Naive thymus-derived CD4-positive, alpha-beta T cell (primary cell): ENCODE measurements at regions of chr19 and their contacts with region 1.

Region 1: GRCh38 chr19:45717166-45717982 is 13.3 kb downstream of the FBXO46 start:
- DNase-seq: peak; percentile 92 to 99 (median 98)
- ATAC-seq: peak; percentile 98
- H3K4me3 ChIP-seq: peak overlapping the region; percentile 80
- H3K4me3 Mint-ChIP-seq: peak overlapping the region; percentile 89 to 99 (median 95)
- H3K27ac ChIP-seq: peak overlapping the region; percentile 89
- H3K27ac Mint-ChIP-seq: peak overlapping the region; percentile 88 to 97 (median 96)
- H3K4me1 ChIP-seq: peaks cover 17 to 26% of the 10 kb centered on the region in 2 donors
- H3K4me1 Mint-ChIP-seq: peaks cover 26 to 55% (median 38%) of the 10 kb centered on the region in 7 donors
- H3K27me3 ChIP-seq: no peaks in the 10 kb centered on the region
- H3K27me3 Mint-ChIP-seq: no peaks in the 10 kb centered on the region

Region 2: DNA sequence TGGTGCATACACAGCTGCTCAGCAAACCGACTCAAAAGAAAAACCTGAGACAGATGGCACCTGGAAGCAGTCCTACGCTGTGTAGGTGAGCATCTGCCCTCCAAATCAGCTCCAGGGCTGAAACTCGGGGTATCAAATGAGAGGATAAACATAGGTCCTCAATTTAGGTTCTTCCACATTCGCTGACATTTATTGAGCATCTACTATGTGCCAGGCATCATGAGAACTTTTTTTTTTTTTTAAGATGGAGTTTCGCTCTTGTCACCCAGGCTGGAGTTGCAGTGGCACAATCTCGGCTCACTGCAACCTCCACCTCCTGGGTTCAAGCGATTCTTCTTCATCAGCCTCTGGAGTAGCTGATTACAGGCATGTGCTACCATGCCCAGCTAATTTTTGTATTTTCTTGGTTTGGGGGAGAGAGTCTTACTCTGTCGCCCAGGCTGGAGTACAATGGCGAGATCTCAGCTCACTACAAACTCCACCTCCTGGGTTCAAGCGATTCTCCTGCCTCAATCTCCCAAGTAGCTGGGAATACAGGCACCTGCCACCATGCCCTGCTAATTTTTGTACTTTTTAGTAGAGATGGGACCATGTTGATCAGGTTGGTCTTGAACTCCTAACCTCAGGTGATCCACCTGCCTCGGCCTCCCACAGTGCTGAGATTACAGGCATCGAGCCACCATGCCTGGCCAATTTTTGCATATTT is 11.5 kb before region 1 on chr19:
- CTCF ChIA-PET with region 1: interaction called, 3 read pairs
- POLR2A ChIA-PET with region 1: interaction called, 15 read pairs
- intact Hi-C with region 1: no loop called
- DNase-seq: no peak
- ATAC-seq: no peak
- H3K4me3 ChIP-seq: no peak overlapping the region
- H3K4me3 Mint-ChIP-seq: no peak overlapping the region
- H3K27ac ChIP-seq: no peak overlapping the region
- H3K27ac Mint-ChIP-seq: no peak overlapping the region
- H3K4me1 ChIP-seq: peaks cover 0 to 3% of the 10 kb centered on the region in 2 donors
- H3K4me1 Mint-ChIP-seq: peaks cover 7 to 26% (median 9%) of the 10 kb centered on the region in 7 donors
- H3K27me3 ChIP-seq: no peaks in the 10 kb centered on the region
- H3K27me3 Mint-ChIP-seq: no peaks in the 10 kb centered on the region

Region 3: GRCh38 chr19:45730389-45731288 is 13.3 kb after region 1 on chr19 and contains the start of gene FBXO46:
- CTCF ChIA-PET with region 1: interaction called, 5 read pairs
- POLR2A ChIA-PET with region 1: interaction called, 29 read pairs
- intact Hi-C with region 1: loop called (anchors 1 kb)
- DNase-seq: peak; percentile 74 to 94 (median 90)
- ATAC-seq: peak; percentile 99
- H3K4me3 ChIP-seq: peak within 1 kb of the TSS; percentile 96
- H3K4me3 Mint-ChIP-seq: peak within 1 kb of the TSS; percentile 85 to 98 (median 92)
- H3K27ac ChIP-seq: peak within 1 kb of the TSS; percentile 92
- H3K27ac Mint-ChIP-seq: peak within 1 kb of the TSS; percentile 60 to 93 (median 91)
- H3K4me1 ChIP-seq: peaks cover 6 to 14% of the 10 kb centered on the region in 2 donors
- H3K4me1 Mint-ChIP-seq: peaks cover 27 to 41% (median 33%) of the 10 kb centered on the region in 7 donors
- H3K27me3 ChIP-seq: no peaks in the 10 kb centered on the region
- H3K27me3 Mint-ChIP-seq: peaks cover 0 to under 1% (median 0%) of the 10 kb centered on the region in 5 donors
- total RNA-seq, gene FBXO46: 21.2 to 52.9 (median 36.6) TPM

Region 4: GRCh38 chr19:45834970-45835369 is 117.6 kb after region 1 on chr19:
- CTCF ChIA-PET with region 1: no interaction called
- POLR2A ChIA-PET with region 1: no interaction called
- intact Hi-C with region 1: no loop called
- DNase-seq: no peak
- ATAC-seq: no peak
- H3K4me3 ChIP-seq: no peak overlapping the region
- H3K4me3 Mint-ChIP-seq: no peak overlapping the region
- H3K27ac ChIP-seq: no peak overlapping the region
- H3K27ac Mint-ChIP-seq: peak overlapping the region in 1 of 9 donors; percentile 59
- H3K4me1 ChIP-seq: no peaks in the 10 kb centered on the region
- H3K4me1 Mint-ChIP-seq: peaks cover 0 to 4% (median 0%) of the 10 kb centered on the region in 7 donors
- H3K27me3 ChIP-seq: no peaks in the 10 kb centered on the region
- H3K27me3 Mint-ChIP-seq: no peaks in the 10 kb centered on the region